ENCODE measurements at regions of chr19 and their contacts with region 1.

Region 1: GRCh38 chr19:49869441-49870176 is 2.2 kb upstream of the PNKP start:
- DNase-seq: peak; percentile 90 to 96
- ATAC-seq: peak; percentile 76 to 90 (median 81)
- H3K4me3 ChIP-seq: peak overlapping the region; percentile 68
- H3K4me3 Mint-ChIP-seq: no peak overlapping the region
- H3K27ac ChIP-seq: peak overlapping the region; percentile 88
- H3K27ac Mint-ChIP-seq: no peak overlapping the region
- H3K4me1 ChIP-seq: peaks cover 51% of the 10 kb centered on the region
- H3K4me1 Mint-ChIP-seq: peaks cover 18 to 20% of the 10 kb centered on the region in 2 donors
- H3K27me3 ChIP-seq: no peaks in the 10 kb centered on the region
- H3K27me3 Mint-ChIP-seq: no peaks in the 10 kb centered on the region
- CTCF ChIP-seq: no peak

Region 2: GRCh38 chr19:49741210-49741844 is 128.3 kb before region 1 on chr19:
- intact Hi-C with region 1: no loop called
- DNase-seq: no peak
- ATAC-seq: no peak
- H3K4me3 ChIP-seq: no peak overlapping the region
- H3K4me3 Mint-ChIP-seq: no peak overlapping the region
- H3K27ac ChIP-seq: no peak overlapping the region
- H3K27ac Mint-ChIP-seq: no peak overlapping the region
- H3K4me1 ChIP-seq: peaks cover 15% of the 10 kb centered on the region
- H3K4me1 Mint-ChIP-seq: peaks cover 5 to 7% of the 10 kb centered on the region in 2 donors
- H3K27me3 ChIP-seq: no peaks in the 10 kb centered on the region
- H3K27me3 Mint-ChIP-seq: no peaks in the 10 kb centered on the region
- CTCF ChIP-seq: no peak

Region 3: DNA sequence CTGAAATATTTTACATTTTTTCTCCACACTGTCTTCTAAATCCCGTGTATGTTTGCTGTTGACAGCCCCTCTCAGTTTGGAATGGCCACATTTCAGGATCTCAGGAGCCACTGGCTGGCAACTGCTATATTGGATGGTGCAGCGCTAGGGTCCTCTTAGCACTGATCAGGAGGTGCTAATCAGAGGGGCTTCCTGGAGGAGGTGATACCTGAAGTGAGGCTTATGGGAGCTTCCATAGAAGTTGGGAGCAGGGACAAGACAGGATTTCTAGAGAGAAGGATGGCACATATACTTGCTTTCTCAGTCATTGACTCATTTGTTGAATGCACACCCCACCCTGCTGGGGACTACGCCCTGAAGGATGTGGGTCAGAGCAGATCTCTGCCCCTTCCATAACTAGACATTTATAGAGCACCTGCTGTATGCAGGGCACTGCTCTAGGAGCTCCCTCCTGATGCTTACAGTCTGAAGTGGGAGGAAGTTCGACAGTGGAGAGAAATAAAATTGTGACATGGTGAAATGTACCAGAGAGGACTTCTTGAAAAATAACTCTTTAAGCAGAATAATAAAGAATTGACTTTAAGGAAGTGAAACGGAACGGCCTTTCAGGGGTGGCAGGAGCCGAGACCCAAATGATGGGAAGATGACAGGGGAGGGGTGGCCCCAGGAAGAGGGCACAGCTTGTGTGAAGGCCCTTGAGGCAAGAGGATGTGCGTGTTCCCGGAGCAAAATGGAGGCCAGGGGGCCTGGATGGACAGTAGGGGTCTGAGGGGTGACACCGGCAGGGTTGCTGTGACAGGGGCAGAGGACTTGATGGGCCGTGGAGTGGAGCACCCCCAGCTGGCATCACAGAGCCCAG is 89.6 kb before region 1 on chr19:
- intact Hi-C with region 1: no loop called
- DNase-seq: no peak
- ATAC-seq: no peak
- H3K4me3 ChIP-seq: no peak overlapping the region
- H3K4me3 Mint-ChIP-seq: peak overlapping the region; percentile 38
- H3K27ac ChIP-seq: peak overlapping the region; percentile 48
- H3K27ac Mint-ChIP-seq: peak overlapping the region; percentile 69 to 74
- H3K4me1 ChIP-seq: peaks cover 54% of the 10 kb centered on the region
- H3K4me1 Mint-ChIP-seq: peaks cover 39 to 53% of the 10 kb centered on the region in 2 donors
- H3K27me3 ChIP-seq: no peaks in the 10 kb centered on the region
- H3K27me3 Mint-ChIP-seq: no peaks in the 10 kb centered on the region
- CTCF ChIP-seq: no peak

Region 4: GRCh38 chr19:49850473-49851342 is 18.9 kb before region 1 on chr19 and contains the start of gene PTOV1:
- intact Hi-C with region 1: loop called (anchors 2 kb)
- DNase-seq: peak; percentile 92 to 95
- ATAC-seq: peak; percentile 90 to 96 (median 91)
- H3K4me3 ChIP-seq: peak within 1 kb of the TSS; percentile 77
- H3K4me3 Mint-ChIP-seq: peak within 1 kb of the TSS; percentile 93
- H3K27ac ChIP-seq: peak within 1 kb of the TSS; percentile 94
- H3K27ac Mint-ChIP-seq: peak within 1 kb of the TSS; percentile 86 to 95
- H3K4me1 ChIP-seq: peaks cover 31% of the 10 kb centered on the region
- H3K4me1 Mint-ChIP-seq: peaks cover 30 to 33% of the 10 kb centered on the region in 2 donors
- H3K27me3 ChIP-seq: no peaks in the 10 kb centered on the region
- H3K27me3 Mint-ChIP-seq: no peaks in the 10 kb centered on the region
- CTCF ChIP-seq: no peak
- total RNA-seq, gene PTOV1: 116 to 132 (median 128) TPM